ENCODE measurements at regions of chr12 and their contacts with region 1.

Region 1: GRCh38 chr12:56571126-56571525 is 49.5 kb downstream of the RBMS2 start:
- DNase-seq: no peak
- H3K4me3 Mint-ChIP-seq: no peak overlapping the region
- H3K27ac Mint-ChIP-seq: no peak overlapping the region
- H3K4me1 Mint-ChIP-seq: peaks cover 15% of the 10 kb centered on the region
- H3K27me3 Mint-ChIP-seq: no peaks in the 10 kb centered on the region

Region 2: GRCh38 chr12:56593909-56594621 is 22.9 kb after region 1 on chr12:
- intact Hi-C with region 1: loop called (anchors 1 kb)
- DNase-seq: peak; percentile 88
- H3K4me3 Mint-ChIP-seq: no peak overlapping the region
- H3K27ac Mint-ChIP-seq: peak overlapping the region; percentile 54
- H3K4me1 Mint-ChIP-seq: peaks cover 1% of the 10 kb centered on the region
- H3K27me3 Mint-ChIP-seq: no peaks in the 10 kb centered on the region

Measured in activated CD4-positive, alpha-beta T cell treated with anti-CD3 and anti-CD28 coated beads, Interleukin-2, amount 10 ng/mL, durations not matched to agents 24 days and 14 days (primary cell).